ENCODE measurements at regions of chr12 and their contacts with region 1.

Region 1: DNA sequence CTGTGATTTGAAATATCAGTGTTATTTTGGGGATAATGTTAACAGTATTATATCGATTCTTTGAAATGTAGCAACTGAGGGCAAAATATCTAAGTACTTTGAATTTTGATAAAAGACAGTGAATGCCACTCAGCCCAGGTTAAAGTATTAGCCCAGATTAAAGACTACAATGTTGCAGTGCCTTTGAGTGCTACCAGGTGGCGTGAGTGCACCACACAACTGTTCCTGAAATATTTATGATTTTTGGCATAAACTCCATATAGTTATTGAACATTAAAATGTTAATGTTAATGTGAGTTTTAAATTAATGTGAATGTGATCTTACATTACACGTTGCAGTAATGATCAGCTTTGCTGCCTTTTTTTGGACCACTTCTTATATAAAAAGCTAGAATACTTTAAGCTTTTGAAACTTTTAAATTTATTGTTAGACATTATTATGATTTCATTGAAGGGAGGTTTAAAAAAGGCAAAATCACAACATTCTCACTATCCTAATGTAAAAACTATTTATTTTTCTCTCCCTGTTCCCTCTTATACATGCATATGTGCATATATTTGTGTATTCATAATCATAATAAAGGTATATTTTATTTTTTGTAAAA is 22.5 kb downstream of the MRPS35 start:
- DNase-seq: no peak
- H3K4me3 ChIP-seq: no peak overlapping the region
- H3K27ac ChIP-seq: no peak overlapping the region
- H3K4me1 ChIP-seq: no peaks in the 10 kb centered on the region
- H3K27me3 ChIP-seq: no peaks in the 10 kb centered on the region
- CTCF ChIP-seq: peak; percentile 53 to 75 (median 71)
- EP300 ChIP-seq: no peak
- POLR2A ChIP-seq: no peak

Region 2: DNA sequence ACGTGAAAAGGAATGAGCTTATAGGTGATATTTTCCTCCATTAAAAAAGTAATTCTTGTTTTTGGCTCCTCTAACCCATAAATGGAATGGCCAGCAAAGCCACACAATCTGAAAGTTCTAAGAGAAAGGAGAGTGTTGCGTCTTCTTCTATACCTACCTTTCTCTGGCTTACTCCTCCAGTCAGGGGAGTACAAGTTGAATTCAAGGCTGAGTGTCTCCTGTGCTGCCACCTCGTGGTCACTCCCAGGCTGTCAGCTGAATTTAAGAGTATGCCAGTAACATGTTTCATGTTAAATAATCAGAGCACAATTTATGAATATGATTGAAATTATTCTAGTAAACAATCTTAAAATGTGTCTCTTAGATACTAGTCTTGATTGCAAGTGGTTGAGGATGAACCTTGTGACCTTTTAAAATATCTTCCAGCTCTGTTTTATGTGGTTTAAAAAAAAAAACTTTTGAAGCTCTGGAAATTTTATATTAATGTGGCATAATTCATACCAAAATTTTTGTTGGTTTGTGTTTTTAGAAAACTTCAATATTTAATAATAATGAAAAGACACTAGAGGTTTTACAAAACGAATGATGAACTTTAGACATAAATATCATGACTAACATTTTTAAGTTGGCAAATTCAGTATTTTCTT is 207.7 kb after region 1 on chr12:
- intact Hi-C with region 1: loop called (anchors 1 kb)
- DNase-seq: peak; percentile 79
- H3K4me3 ChIP-seq: no peak overlapping the region
- H3K27ac ChIP-seq: no peak overlapping the region
- H3K4me1 ChIP-seq: no peaks in the 10 kb centered on the region
- H3K27me3 ChIP-seq: no peaks in the 10 kb centered on the region
- CTCF ChIP-seq: peak; percentile 56 to 80 (median 68)
- EP300 ChIP-seq: no peak
- POLR2A ChIP-seq: no peak

Region 3: GRCh38 chr12:28872654-28873268 is 1139.6 kb after region 1 on chr12:
- intact Hi-C with region 1: loop called (anchors 10 kb)
- DNase-seq: no peak
- H3K4me3 ChIP-seq: no peak overlapping the region
- H3K27ac ChIP-seq: no peak overlapping the region
- H3K4me1 ChIP-seq: peaks cover 0 to 16% (median 0%) of the 10 kb centered on the region in 4 donors
- H3K27me3 ChIP-seq: no peaks in the 10 kb centered on the region
- CTCF ChIP-seq: peak in 2 of 4 experiments; percentile 28 to 46
- EP300 ChIP-seq: no peak
- POLR2A ChIP-seq: no peak